Ovary (tissue), 10 donors: ENCODE measurements at regions of chr2 and their contacts with region 1.

Region 1: DNA sequence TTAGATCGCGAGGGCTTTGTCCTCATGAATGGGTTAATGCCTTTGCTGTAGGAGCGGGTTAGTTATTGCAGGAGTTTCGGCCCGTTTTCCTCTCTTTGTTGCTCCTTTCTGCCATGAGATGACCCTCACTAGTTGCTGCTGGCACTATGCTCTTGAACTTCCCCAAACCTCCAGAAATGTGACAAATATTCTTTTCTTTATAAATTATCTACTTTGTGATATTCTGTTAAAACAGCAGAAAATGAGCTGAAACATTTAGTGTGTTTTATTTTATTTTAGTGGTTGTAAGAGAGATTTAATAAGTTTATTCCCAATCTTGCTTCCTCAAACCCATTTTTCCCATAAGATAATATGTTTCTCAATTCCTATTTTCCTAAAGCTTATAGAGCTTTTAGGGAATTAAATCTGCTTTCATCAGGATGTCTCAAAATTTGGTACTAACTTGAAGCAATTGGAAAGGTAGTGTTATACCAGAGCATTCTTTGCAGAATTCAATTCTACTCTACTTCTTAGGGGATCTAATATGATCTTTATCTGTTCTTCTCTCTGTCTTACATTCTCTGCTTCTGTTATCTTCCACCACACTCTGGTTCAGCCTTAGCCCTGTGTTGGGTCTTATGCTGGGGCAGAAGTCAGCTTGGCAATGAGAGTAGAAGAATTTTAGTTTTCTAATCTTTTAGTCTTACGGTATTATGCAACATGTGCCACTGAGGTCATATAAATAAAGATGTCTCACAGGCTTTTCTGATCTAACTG is 23.1 kb downstream of the DDX1 start:
- DNase-seq: no peak
- H3K4me3 ChIP-seq: no peak overlapping the region
- H3K27ac ChIP-seq: no peak overlapping the region
- H3K4me1 ChIP-seq: no peaks in the 10 kb centered on the region
- H3K27me3 ChIP-seq: no peaks in the 10 kb centered on the region
- CTCF ChIP-seq: no peak
- EP300 ChIP-seq: no peak
- POLR2A ChIP-seq: no peak

Region 2: GRCh38 chr2:14480906-14481305 is 1133.8 kb before region 1 on chr2:
- intact Hi-C with region 1: loop called in 1 of 4 experiments (anchors 10 kb)
- DNase-seq: no peak
- H3K4me3 ChIP-seq: no peak overlapping the region
- H3K27ac ChIP-seq: no peak overlapping the region
- H3K4me1 ChIP-seq: no peaks in the 10 kb centered on the region
- H3K27me3 ChIP-seq: no peaks in the 10 kb centered on the region
- CTCF ChIP-seq: no peak
- EP300 ChIP-seq: no peak
- POLR2A ChIP-seq: no peak

Region 3: GRCh38 chr2:15325296-15325695 is 289.4 kb before region 1 on chr2:
- intact Hi-C with region 1: no loop called
- DNase-seq: no peak
- H3K4me3 ChIP-seq: no peak overlapping the region
- H3K27ac ChIP-seq: no peak overlapping the region
- H3K4me1 ChIP-seq: no peaks in the 10 kb centered on the region
- H3K27me3 ChIP-seq: no peaks in the 10 kb centered on the region
- CTCF ChIP-seq: no peak
- EP300 ChIP-seq: no peak
- POLR2A ChIP-seq: no peak

Region 4: DNA sequence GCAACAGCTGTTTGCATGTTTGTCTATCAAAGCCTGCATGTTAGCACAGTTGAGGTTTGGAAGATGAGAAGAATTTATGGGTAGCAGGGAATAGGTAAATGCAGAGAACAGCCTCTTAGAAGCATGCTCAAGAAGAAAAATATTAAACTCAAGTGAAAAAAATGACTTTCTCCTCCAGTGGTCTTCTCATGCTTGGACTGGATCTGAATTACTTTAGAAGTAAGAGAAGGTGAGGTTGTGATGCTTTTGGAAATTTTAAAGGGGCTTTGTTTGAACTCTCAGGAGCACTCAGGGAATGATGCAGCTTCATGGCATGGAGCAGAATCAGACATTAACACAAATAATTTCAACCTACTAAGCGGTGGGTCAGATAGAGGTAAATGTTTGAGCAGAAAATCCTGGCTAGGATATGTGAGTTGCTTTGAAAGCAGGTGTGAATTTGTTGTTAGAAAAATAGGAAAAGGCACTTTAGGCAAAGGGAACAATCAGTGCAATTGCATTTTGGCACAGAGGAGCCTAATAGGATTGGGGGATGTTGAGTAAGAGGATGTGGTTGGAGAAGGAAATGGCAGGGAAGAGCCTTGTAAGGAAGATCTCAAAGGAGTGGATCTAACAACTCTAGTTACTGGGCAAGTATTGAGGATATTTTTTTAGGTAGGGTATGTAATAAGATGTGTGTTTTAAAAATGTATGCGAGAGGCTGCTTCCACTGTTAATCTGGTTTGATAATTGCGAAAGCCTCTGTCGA is 53.3 kb after region 1 on chr2:
- intact Hi-C with region 1: no loop called
- DNase-seq: no peak
- H3K4me3 ChIP-seq: no peak overlapping the region
- H3K27ac ChIP-seq: peak overlapping the region in 1 of 2 donors; percentile 70
- H3K4me1 ChIP-seq: no peaks in the 10 kb centered on the region
- H3K27me3 ChIP-seq: no peaks in the 10 kb centered on the region
- CTCF ChIP-seq: no peak
- EP300 ChIP-seq: no peak
- POLR2A ChIP-seq: no peak